AG04450 (cell line): ENCODE measurements at regions of chr6 and their contacts with region 1.

Region 1: GRCh38 chr6:100116411-100117194 is 122.6 kb upstream of the MCHR2 start:
- DNase-seq: peak; percentile 52
- H3K4me3 ChIP-seq: no peak overlapping the region
- H3K27ac ChIP-seq: no peak overlapping the region
- H3K27me3 ChIP-seq: peaks cover 30% of the 10 kb centered on the region
- CTCF ChIP-seq: peak; percentile 83

Region 2: GRCh38 chr6:100105138-100105753 is 11.4 kb before region 1 on chr6:
- CTCF ChIA-PET with region 1: interaction called, 21 read pairs
- POLR2A ChIA-PET with region 1: no interaction called
- DNase-seq: no peak
- H3K4me3 ChIP-seq: no peak overlapping the region
- H3K27ac ChIP-seq: no peak overlapping the region
- H3K27me3 ChIP-seq: peaks cover 13% of the 10 kb centered on the region
- CTCF ChIP-seq: no peak

Region 3: GRCh38 chr6:100176311-100176950 is 59.8 kb after region 1 on chr6:
- CTCF ChIA-PET with region 1: interaction called, 16 read pairs
- POLR2A ChIA-PET with region 1: no interaction called
- DNase-seq: peak; percentile 27
- H3K4me3 ChIP-seq: no peak overlapping the region; the same call in 1 of the 2 replicates
- H3K27ac ChIP-seq: peak overlapping the region; percentile 80
- H3K27me3 ChIP-seq: no peaks in the 10 kb centered on the region
- CTCF ChIP-seq: peak; percentile 70

Region 4: DNA sequence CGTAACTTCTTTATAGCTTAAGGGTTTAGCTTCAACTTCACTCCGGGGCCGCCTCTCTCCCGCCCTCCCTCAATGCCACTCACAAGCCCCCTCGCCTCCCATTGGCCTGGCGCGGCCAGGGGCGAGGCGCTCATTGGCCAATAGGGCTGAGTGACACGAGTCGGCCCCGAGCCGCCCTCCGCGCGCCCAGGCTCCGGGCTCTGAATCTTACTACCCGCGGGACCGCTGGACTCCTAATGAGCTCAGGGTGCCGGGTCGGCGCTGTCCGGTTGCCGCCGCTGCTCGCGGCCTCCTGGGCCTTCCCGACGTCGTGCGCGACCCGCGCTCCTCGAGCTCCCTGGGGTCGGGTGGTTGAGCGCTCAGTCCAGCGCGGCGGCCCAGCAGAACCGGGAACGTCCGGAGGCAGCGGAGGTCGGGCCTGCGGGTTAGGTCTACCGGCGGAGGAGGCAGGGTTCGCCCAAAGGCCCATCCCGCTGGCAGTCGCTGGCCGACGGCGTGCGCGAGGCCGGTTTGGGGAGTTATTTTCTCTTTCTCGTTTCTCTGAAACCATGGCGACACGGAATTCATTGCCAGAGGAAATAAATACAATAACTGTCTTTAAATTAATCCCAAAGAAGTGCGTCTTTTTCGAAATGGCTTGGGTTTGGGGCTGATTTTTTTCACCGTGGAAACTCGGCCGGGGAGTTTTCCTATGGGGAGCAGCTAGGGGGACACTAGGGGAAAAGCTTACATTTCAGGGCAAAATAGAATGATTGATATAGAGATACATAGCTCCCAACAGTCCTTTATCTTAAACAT is 348.5 kb after region 1 on chr6 and contains the start of gene SIM1:
- CTCF ChIA-PET with region 1: interaction called, 16 read pairs
- POLR2A ChIA-PET with region 1: no interaction called
- DNase-seq: no peak
- H3K4me3 ChIP-seq: peak within 1 kb of the TSS; percentile 45
- H3K27ac ChIP-seq: no peak within 1 kb of the TSS
- H3K27me3 ChIP-seq: peaks cover 97% of the 10 kb centered on the region
- CTCF ChIP-seq: no peak
- polyA plus RNA-seq, gene SIM1: not detected in 2 replicates

Region 5: DNA sequence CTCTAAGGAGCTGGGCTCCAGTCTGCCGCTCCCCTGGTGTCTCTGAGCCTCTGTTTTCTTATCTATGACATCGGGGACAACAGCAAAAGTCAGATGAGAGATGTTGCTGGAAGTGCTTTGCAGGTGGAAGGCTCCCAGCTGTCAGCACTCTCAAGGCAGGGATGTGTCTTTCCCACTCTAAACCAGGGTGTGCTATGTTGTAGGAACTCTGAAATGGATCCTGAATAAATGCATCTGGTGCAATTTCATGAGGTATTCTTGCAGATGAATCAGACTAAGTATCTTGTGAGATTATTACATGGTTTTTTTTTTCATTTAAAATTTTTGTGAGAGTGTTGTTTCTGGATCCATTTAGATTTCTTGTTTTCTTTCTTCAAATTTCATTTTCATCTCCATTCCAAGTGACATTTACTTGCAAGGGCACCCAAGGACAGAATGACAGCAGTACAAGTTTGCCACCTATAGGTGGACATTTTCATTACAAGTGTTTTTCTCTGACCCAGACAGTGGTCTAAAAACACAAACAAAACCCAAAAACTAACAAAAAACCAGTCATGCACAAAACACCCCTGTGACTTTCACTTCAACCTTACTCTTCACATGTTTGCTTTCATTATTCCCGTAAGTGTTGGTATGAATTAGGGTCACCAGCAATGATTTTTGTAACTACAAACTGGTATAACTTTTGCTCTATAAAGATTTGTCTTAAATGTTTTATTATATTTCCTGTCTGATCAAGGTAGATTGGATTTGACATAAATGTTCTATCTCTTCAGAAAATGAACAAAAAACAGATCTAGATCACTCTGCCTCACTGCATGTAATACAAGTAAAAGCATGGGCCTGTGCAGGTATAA is 362.8 kb after region 1 on chr6:
- CTCF ChIA-PET with region 1: interaction called, 90 read pairs
- POLR2A ChIA-PET with region 1: no interaction called
- DNase-seq: no peak
- H3K4me3 ChIP-seq: no peak overlapping the region
- H3K27ac ChIP-seq: no peak overlapping the region
- H3K27me3 ChIP-seq: peaks cover 12% of the 10 kb centered on the region
- CTCF ChIP-seq: peak; percentile 78

Region 6: GRCh38 chr6:100573167-100573566 is 456.6 kb after region 1 on chr6:
- CTCF ChIA-PET with region 1: interaction called, 16 read pairs
- POLR2A ChIA-PET with region 1: no interaction called
- DNase-seq: no peak
- H3K4me3 ChIP-seq: no peak overlapping the region
- H3K27ac ChIP-seq: no peak overlapping the region
- H3K27me3 ChIP-seq: no peaks in the 10 kb centered on the region
- CTCF ChIP-seq: peak; percentile 62

Region 7: GRCh38 chr6:100719883-100720682 is 603.5 kb after region 1 on chr6:
- CTCF ChIA-PET with region 1: interaction called, 12 read pairs
- POLR2A ChIA-PET with region 1: no interaction called
- DNase-seq: no peak
- H3K4me3 ChIP-seq: no peak overlapping the region
- H3K27ac ChIP-seq: no peak overlapping the region
- H3K27me3 ChIP-seq: no peaks in the 10 kb centered on the region
- CTCF ChIP-seq: peak; percentile 50